Prostate gland (tissue), 2 donors: ENCODE measurements at regions of chr13 and their contacts with region 1.

Region 1: DNA sequence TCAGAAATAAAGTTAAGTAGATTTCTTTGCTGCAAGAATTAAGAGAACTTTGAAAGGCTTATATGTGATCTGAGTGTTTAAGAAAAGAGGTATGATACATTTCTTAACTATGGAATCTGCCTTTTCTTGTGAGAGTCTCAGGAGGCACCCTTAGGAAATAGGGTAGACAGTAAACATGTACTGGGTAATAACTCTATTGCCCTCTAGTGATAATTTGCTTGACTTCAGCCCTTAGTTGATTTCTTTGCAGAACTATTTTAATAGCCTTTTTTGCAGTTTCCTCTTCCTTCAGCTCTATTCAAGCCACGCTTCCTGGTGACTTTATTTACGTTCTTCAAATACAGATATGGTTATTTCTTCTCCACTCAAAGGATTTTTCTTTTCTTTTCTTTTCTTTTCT is 37.0 kb upstream of the CCNA1 start:
- DNase-seq: no peak
- H3K4me3 ChIP-seq: no peak overlapping the region
- H3K27ac ChIP-seq: no peak overlapping the region
- H3K4me1 ChIP-seq: no peaks in the 10 kb centered on the region
- H3K27me3 ChIP-seq: no peaks in the 10 kb centered on the region
- CTCF ChIP-seq: peak in 3 of 4 experiments; percentile 19 to 48 (median 38)
- POLR2A ChIP-seq: no peak

Region 2: GRCh38 chr13:35978603-35979316 is 416.5 kb before region 1 on chr13:
- intact Hi-C with region 1: loop called (anchors 10 kb)
- DNase-seq: peak; percentile 30
- H3K4me3 ChIP-seq: no peak overlapping the region
- H3K27ac ChIP-seq: no peak overlapping the region
- H3K4me1 ChIP-seq: no peaks in the 10 kb centered on the region
- H3K27me3 ChIP-seq: no peaks in the 10 kb centered on the region
- CTCF ChIP-seq: peak; percentile 70 to 92 (median 88)
- POLR2A ChIP-seq: no peak

Region 3: DNA sequence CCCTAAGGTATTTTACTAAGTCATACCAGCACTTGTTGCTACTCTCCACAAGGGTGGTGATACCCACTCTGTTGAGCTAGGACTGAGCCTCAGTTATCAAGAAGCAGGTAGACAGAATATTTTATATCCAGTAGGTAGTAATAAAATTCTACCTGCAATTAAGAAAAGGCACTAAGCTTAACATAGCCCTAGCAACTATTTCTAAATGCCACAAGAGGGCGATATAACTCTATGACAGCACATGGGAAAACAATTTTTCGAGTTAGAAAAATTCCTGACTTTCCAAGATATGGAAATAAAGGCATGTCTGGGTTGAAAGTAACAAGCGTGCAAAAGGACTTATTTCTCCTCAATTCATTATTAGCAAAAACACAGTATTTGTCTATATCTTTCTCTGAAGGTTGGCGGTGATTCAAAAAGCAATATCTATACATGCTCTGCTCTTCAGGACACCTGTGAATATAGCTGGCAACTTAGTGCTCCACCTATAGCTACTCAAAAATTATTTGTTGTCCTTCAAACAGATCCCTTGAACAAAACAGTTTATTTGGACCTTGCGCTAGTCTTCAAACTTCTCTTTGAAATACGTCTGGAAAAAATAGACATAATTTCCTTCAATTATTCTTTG is 112.3 kb before region 1 on chr13:
- intact Hi-C with region 1: loop called (anchors 10 kb)
- DNase-seq: no peak
- H3K4me3 ChIP-seq: no peak overlapping the region
- H3K27ac ChIP-seq: no peak overlapping the region
- H3K4me1 ChIP-seq: no peaks in the 10 kb centered on the region
- H3K27me3 ChIP-seq: no peaks in the 10 kb centered on the region
- CTCF ChIP-seq: peak; percentile 47 to 80 (median 78)
- POLR2A ChIP-seq: no peak

Region 4: DNA sequence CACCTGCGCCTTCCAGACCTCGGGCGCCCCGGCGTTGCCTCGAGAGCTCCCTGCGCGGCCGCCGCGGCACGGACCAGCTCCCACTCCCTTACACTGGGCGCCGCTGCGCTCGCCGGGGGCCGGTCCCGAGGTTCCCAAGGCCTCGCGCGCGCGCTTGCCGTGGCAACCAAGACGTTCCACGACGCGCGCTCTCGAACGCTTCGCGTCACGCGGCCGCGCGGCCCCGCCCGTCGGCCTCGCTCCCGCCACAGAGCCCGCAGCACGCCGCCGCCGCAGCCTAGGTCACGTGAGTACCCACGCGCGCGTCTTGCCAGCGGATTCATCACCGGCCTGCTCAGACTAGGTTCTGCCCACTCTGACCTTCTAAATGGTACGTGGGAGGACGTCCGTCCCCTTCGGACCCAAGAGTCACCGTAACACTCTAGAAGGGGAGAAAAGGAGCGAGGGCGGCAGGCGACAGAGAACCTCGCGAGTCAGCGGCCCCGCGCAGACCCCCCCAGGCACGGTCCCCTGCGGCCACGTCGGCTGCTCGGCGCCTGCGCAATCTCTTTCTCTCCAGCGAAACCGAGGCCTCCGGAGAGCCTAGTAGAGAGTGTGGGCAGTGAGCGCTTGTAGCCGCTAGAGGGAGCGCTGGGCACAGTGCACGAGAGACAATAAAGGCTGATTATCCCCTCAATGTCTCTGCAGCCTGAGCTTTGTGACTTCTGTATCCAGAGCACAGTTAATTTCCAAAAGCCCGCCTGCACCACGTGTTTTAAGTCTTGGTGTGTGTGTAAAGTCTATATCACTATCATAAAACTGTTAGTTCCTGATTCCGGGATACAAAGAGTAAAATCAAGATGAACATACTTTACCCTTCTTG is 48.8 kb before region 1 on chr13 and contains the start of gene SPART:
- intact Hi-C with region 1: loop called (anchors 1 kb)
- DNase-seq: peak; percentile 95
- H3K4me3 ChIP-seq: peak within 1 kb of the TSS; percentile 69 to 97
- H3K27ac ChIP-seq: peak within 1 kb of the TSS; percentile 98 to 99
- H3K4me1 ChIP-seq: no peaks in the 10 kb centered on the region
- H3K27me3 ChIP-seq: no peaks in the 10 kb centered on the region
- CTCF ChIP-seq: peak; percentile 90 to 97 (median 95)
- POLR2A ChIP-seq: peak; percentile 65
- total RNA-seq, gene SPART: 41.9 to 52.8 TPM